Naive thymus-derived CD4-positive, alpha-beta T cell (primary cell): ENCODE measurements at regions of chr18 and their contacts with region 1.

Region 1: DNA sequence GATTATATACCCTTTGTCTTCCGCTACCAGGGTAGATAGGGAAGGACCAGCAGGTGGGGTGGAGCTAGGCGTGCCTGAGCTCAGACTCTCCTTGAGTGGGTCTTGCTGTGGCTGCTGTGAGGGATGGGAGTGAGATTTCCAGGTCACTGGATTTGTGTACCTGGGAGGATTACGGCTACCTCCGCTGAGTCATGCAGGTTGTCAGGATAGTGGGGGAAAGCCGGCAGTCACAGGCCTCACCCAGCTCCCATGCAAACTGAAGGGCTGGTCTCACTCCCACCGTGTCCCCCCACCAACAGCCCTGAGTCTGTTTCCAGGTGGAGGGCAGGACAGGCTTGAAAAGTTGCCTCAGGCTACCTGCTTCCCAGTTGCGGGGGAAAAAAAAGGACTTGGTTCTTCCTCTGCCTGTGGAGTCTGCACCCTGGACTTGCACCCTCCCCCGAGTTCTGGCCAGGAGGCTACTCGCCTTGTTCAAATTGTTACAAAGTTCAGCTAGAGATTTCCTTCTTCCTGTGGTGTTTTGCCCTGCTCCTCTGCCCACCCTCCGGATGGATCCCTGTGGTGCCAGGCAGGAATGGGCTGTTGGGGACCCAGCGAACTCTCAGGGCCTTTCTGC is 268.3 kb downstream of the VAPA start:
- DNase-seq: no peak
- ATAC-seq: no peak
- H3K4me3 ChIP-seq: no peak overlapping the region
- H3K4me3 Mint-ChIP-seq: no peak overlapping the region
- H3K27ac ChIP-seq: no peak overlapping the region
- H3K27ac Mint-ChIP-seq: no peak overlapping the region
- H3K4me1 ChIP-seq: no peaks in the 10 kb centered on the region
- H3K4me1 Mint-ChIP-seq: peaks cover 4 to 23% (median 15%) of the 10 kb centered on the region in 7 donors
- H3K27me3 ChIP-seq: no peaks in the 10 kb centered on the region
- H3K27me3 Mint-ChIP-seq: peaks cover 5 to 21% (median 16%) of the 10 kb centered on the region in 5 donors

Region 2: DNA sequence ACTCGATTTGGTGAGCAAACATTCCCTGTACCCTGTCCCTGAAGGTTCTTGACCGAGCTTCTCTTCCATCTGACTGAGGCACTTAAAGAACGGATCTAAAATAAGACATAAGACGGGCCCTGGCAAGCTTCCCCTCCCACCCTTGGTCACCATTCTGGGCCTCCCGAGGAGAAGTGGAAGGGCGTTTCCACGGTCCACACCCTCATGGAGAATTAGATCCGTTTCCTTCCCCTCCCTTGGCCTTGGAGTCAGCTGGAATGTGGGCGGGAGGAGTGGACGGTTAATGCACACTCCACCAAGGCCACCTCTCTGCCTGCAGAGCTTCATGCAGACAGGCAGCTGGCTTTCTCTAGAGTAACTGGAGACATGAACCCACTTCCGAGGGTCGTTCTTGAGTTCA is 15.0 kb after region 1 on chr18:
- CTCF ChIA-PET with region 1: no interaction called
- POLR2A ChIA-PET with region 1: no interaction called
- intact Hi-C with region 1: no loop called
- DNase-seq: no peak
- ATAC-seq: no peak
- H3K4me3 ChIP-seq: no peak overlapping the region
- H3K4me3 Mint-ChIP-seq: no peak overlapping the region
- H3K27ac ChIP-seq: no peak overlapping the region
- H3K27ac Mint-ChIP-seq: no peak overlapping the region
- H3K4me1 ChIP-seq: no peaks in the 10 kb centered on the region
- H3K4me1 Mint-ChIP-seq: peaks cover 0 to under 1% (median 0%) of the 10 kb centered on the region in 7 donors
- H3K27me3 ChIP-seq: no peaks in the 10 kb centered on the region
- H3K27me3 Mint-ChIP-seq: peaks cover 0 to 6% (median 3%) of the 10 kb centered on the region in 5 donors

Region 3: DNA sequence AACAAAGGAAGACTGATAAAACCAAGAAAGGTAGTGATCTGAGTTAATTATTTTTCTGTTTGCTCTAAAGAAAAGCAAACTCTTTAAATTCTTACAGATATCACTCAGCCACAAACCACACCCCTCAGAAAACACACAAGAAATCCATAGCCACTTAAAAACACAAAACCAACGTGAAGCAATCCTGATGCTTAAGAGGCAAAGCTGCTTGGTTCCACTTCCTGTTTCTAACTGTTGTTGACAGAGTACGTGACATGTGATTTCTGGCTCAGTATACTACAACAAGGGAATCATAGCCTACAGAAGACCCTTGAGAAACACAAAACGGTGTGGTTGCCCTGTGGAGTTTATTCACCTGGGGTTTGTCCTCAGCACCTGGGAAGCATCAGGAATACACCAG is 31.4 kb after region 1 on chr18:
- CTCF ChIA-PET with region 1: no interaction called
- POLR2A ChIA-PET with region 1: no interaction called
- intact Hi-C with region 1: loop called in 1 of 2 experiments (anchors 1 kb)
- DNase-seq: peak in 1 of 9 donors; percentile 20
- ATAC-seq: peak; percentile 83
- H3K4me3 ChIP-seq: no peak overlapping the region
- H3K4me3 Mint-ChIP-seq: peak overlapping the region in 1 of 10 donors; percentile 54
- H3K27ac ChIP-seq: no peak overlapping the region
- H3K27ac Mint-ChIP-seq: peak overlapping the region in 2 of 9 donors; percentile 22 to 64
- H3K4me1 ChIP-seq: no peaks in the 10 kb centered on the region
- H3K4me1 Mint-ChIP-seq: peaks cover 0 to 25% (median 0%) of the 10 kb centered on the region in 7 donors
- H3K27me3 ChIP-seq: no peaks in the 10 kb centered on the region
- H3K27me3 Mint-ChIP-seq: peaks cover 7 to 29% (median 13%) of the 10 kb centered on the region in 5 donors